ENCODE measurements at regions of chr11 and their contacts with region 1.

Region 1: GRCh38 chr11:16820324-16821092 is 82.1 kb downstream of the C11orf58 start:
- DNase-seq: peak; percentile 85
- ATAC-seq: peak; percentile 94
- H3K4me3 Mint-ChIP-seq: no peak overlapping the region
- H3K27ac Mint-ChIP-seq: no peak overlapping the region
- H3K4me1 Mint-ChIP-seq: peaks cover 9% of the 10 kb centered on the region
- H3K27me3 Mint-ChIP-seq: no peaks in the 10 kb centered on the region
- CTCF ChIP-seq: peak; percentile 78

Region 2: GRCh38 chr11:16809886-16810668 is 10.4 kb before region 1 on chr11:
- CTCF ChIA-PET with region 1: interaction called, 18 read pairs
- POLR2A ChIA-PET with region 1: no interaction called
- DNase-seq: no peak
- ATAC-seq: no peak
- H3K4me3 Mint-ChIP-seq: no peak overlapping the region
- H3K27ac Mint-ChIP-seq: 0 out of 2 replicates have a peak overlapping the region, but pooled peaks have one; percentile 33
- H3K4me1 Mint-ChIP-seq: peaks cover 7% of the 10 kb centered on the region
- H3K27me3 Mint-ChIP-seq: no peaks in the 10 kb centered on the region
- CTCF ChIP-seq: no peak

Region 3: GRCh38 chr11:16881074-16881709 is 60.7 kb after region 1 on chr11:
- CTCF ChIA-PET with region 1: interaction called, 14 read pairs
- POLR2A ChIA-PET with region 1: no interaction called
- DNase-seq: peak; percentile 22
- ATAC-seq: peak; percentile 82
- H3K4me3 Mint-ChIP-seq: no peak overlapping the region
- H3K27ac Mint-ChIP-seq: 0 out of 2 replicates have a peak overlapping the region, but pooled peaks have one; percentile 10
- H3K4me1 Mint-ChIP-seq: peaks cover 39% of the 10 kb centered on the region
- H3K27me3 Mint-ChIP-seq: no peaks in the 10 kb centered on the region
- CTCF ChIP-seq: no peak

Region 4: DNA sequence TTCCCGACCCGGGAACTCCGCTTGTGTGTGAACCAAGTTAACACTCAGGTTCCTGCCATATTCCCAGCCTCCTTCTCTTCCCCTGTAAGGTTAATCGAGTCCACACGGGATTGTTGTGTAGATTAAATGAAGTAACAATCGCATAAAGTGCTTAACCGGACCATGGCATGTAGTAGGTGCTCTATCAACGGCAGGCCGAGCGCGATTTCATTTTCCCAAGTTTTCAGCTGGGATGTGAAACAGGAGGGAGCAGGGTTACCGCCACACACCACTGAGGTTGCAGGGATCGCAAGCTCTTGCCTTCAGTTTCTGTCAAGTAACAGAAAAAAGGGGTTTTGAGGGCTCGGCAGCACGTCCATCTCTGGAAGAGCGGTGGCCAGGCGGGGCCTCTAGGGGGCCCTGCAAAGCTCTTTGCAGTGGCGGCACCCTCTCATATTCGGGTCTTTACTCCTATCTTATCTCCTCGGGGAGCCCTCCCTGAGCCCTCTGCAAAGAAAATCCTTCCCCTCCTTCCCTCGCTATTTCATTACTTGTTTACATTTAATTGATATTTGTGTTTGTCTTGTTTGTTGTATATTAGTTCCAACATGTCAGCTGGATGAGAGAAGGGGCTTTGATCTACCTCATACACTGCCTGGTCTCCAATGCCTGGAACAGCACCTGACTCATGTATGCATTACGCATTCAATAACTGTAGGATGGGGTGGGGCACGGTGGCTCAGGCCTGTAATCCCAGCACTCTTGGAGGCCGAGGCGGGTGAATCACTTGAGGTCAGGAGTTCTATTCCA is 194.5 kb after region 1 on chr11:
- CTCF ChIA-PET with region 1: interaction called, 12 read pairs
- POLR2A ChIA-PET with region 1: no interaction called
- DNase-seq: peak; percentile 59
- ATAC-seq: peak; percentile 58
- H3K4me3 Mint-ChIP-seq: peak overlapping the region; percentile 86
- H3K27ac Mint-ChIP-seq: peak overlapping the region; percentile 31; the same call in 1 of the 2 replicates
- H3K4me1 Mint-ChIP-seq: peaks cover 10% of the 10 kb centered on the region
- H3K27me3 Mint-ChIP-seq: peaks cover 14% of the 10 kb centered on the region; the same call in 1 of the 2 replicates
- CTCF ChIP-seq: peak; percentile 34; the same call in 1 of the 2 replicates